ENCODE measurements at regions of chr2 and their contacts with region 1.

Region 1: DNA sequence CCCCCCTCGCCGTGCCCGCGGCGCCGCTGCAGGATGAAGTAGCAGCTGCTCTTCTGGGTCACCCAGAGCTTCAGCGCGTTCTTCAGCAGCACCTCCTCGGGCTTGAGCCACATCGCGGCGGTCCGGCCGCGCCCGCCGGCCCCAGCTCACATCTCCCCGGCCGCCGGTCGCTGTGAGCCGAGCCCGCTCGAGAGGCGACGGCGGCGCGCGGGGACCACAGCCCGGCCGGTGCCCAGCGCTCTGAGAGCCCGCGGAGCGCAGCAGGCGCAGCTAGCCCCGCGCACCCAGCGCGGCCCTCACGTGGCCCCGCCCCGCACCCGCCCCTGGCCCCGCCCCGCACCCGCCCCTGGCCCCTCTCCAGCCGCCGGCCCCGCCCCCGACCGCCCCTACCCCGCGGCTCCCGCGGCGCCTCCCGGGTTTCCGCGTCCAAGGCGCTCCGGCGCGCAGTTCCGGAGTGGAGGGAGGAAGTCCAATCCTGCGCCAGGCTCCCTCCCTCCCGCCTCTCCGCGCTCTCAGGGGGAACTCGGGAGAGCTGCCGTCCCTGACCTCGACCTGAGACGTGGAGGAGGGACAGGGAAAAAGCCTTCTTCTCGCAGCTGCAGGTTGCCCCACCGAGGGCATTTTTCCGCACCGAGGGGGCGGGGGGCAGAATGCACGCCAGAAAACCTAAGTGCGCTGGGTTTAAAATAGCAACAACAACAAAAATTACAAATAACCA is at the start of gene TBC1D8:
- DNase-seq: peak; percentile 80 to 82
- ATAC-seq: peak; percentile 81 to 83
- H3K4me3 ChIP-seq: peak within 1 kb of the TSS; percentile 85
- H3K27ac ChIP-seq: peak within 1 kb of the TSS; percentile 92 to 98
- H3K4me1 ChIP-seq: peaks cover 42% of the 10 kb centered on the region
- CTCF ChIP-seq: no peak
- EP300 ChIP-seq: no peak
- POLR2A ChIP-seq: peak; percentile 81
- RAD21 ChIP-seq: peak in 1 of 2 experiments; percentile 18; a peak in 2 of 5 replicates
- polyA plus RNA-seq, gene TBC1D8: 107 and 119 TPM in 2 replicates

Region 2: DNA sequence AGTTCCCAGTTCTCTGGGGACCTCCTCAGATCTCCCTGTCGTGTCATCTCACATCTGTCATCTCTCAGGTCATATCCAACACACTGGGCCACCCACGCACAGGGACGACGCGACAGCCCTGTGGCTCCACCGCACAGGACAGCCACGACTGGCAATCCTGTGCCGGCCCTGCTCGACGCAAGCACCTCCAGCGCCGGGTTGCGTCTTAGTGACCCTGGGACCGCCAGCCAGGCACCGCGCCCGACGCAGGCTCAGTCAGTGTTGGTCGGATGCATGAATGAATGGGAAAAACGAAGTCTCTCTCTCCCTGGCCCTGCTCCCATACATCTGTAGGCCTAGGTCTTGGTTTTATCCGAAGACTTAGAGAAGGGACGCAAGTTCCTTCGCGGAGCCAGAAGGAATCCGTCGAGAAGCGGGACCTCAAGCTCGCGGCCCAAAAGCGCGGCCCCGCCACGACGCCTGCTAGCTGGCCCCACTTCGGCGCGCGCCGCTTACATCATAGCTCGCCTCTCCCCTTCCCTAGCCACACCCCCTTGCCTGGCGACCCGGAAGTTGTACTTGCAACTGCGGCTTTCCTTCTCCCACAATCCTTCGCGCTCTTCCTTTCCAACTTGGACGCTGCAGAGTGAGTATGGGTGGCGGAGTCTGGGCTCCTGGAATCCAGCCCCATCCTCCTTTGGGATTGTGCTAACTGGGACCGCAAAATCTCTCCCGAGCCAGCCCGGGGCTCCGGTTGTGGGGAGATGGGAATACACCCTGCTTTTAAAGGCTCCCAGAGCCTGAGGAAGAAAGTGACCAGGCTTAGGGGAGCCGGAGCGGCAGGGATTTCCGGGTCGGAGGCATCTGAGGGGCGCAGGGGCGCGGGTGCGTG is 149.4 kb before region 1 on chr2 and contains the start of gene RPL31:
- CTCF ChIA-PET with region 1: interaction called, 17 read pairs
- POLR2A ChIA-PET with region 1: interaction called, 22 read pairs
- DNase-seq: peak; percentile 94 to 98
- ATAC-seq: peak; percentile 85 to 88
- H3K4me3 ChIP-seq: peak within 1 kb of the TSS; percentile 71
- H3K27ac ChIP-seq: peak within 1 kb of the TSS; percentile 86 to 98
- H3K4me1 ChIP-seq: peaks cover 39% of the 10 kb centered on the region
- CTCF ChIP-seq: no peak
- EP300 ChIP-seq: no peak
- POLR2A ChIP-seq: peak; percentile 97
- RAD21 ChIP-seq: no peak
- polyA plus RNA-seq, gene RPL31: 2,064 and 3,103 TPM in 2 replicates

Region 3: DNA sequence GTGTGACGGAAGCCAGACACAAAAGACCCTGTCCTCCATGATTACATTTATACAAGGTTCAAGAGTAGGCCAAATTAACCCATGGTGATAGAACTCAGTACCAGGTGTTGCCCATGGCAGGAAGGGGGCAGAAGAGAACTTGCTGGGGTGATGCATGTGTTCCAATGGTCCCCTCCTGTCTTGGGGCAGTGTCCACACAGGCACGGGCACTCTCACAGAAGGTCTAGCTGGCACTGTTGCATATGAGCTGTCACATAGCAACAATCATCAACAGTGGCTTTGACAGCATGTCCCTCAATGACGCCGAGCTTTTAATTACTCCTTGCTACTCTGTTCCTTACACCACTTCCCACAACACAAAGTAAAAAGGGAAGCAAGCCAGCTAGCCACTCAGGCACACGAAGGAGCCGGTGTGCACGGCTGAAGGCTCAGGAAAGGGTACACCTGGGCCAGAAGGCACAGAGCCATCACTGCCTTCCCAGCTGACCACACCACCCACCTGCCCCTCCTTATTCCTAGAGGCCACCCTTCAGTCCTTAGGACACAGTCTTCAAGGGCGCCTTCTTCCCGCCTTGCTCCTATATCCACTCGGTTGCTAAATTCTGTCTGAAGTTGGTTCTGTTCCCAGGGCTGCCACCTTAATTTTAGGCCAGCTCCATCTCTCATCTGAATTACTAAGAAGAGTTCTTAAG is 120.3 kb before region 1 on chr2:
- CTCF ChIA-PET with region 1: interaction called, 107 read pairs
- POLR2A ChIA-PET with region 1: interaction called, 6 read pairs
- DNase-seq: no peak
- ATAC-seq: peak; percentile 19 to 27; a peak in 2 of 6 replicates
- H3K4me3 ChIP-seq: no peak overlapping the region
- H3K27ac ChIP-seq: no peak overlapping the region
- H3K4me1 ChIP-seq: peaks cover 3% of the 10 kb centered on the region; the same call in 1 of the 3 replicates
- CTCF ChIP-seq: no peak
- EP300 ChIP-seq: no peak
- POLR2A ChIP-seq: no peak
- RAD21 ChIP-seq: peak in 1 of 2 experiments; percentile 28; a peak in 1 of 5 replicates

Region 4: GRCh38 chr2:101064868-101065549 is 86.3 kb before region 1 on chr2:
- CTCF ChIA-PET with region 1: interaction called, 14 read pairs
- POLR2A ChIA-PET with region 1: interaction called, 16 read pairs
- DNase-seq: peak; percentile 70 to 87
- ATAC-seq: peak; percentile 79 to 90
- H3K4me3 ChIP-seq: peak overlapping the region; percentile 21; the same call in 1 of the 3 replicates
- H3K27ac ChIP-seq: peak overlapping the region; percentile 81 to 86
- H3K4me1 ChIP-seq: peaks cover 83% of the 10 kb centered on the region
- CTCF ChIP-seq: no peak
- EP300 ChIP-seq: peak in 1 of 2 experiments; percentile 38; a peak in 1 of 5 replicates
- POLR2A ChIP-seq: no peak
- RAD21 ChIP-seq: no peak; a peak in 1 of 5 replicates

Region 5: DNA sequence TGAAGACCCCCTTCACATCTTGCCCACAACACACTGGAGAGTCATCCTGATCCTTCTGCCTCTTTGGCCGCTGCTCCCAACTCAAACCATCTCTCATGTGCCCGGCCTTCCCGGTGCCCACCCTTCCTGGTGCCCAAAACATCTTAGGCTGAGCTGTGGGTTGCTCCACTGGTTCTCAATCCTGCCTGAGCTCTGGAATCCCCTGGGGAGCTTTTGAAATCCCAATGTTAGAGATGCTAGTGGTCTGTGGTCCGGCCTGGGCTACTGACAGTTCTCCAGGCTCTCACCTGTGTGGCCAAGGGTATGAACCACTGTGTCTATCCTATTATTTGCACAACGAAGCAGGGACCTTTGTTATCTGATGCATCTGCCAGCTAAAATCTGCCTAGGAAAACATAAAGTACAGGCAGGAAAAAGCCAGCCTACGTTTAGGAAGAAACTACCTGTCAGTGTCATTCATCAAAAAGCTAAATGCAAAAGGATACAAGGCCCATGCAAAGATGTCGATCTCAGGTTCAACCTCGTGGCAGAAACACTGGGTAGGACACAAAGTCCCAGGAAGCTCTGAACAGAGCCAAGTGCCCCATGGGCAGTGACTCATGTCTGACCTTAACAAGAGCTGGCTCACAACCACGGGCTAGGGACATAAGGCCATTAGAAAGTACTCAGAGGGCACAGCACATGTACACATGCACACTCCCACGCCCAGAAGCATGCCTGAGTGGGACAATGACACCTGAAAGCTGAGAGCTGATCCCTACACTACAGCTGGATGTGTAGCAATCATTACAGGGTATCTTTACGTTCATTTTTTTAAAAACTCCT is 30.9 kb before region 1 on chr2:
- CTCF ChIA-PET with region 1: interaction called, 37 read pairs
- POLR2A ChIA-PET with region 1: interaction called, 26 read pairs
- DNase-seq: peak; percentile 49 to 95
- ATAC-seq: peak; percentile 51 to 58
- H3K4me3 ChIP-seq: peak overlapping the region; percentile 4; the same call in 1 of the 3 replicates
- H3K27ac ChIP-seq: peak overlapping the region; percentile 89 to 93
- H3K4me1 ChIP-seq: peaks cover 95% of the 10 kb centered on the region
- CTCF ChIP-seq: no peak
- EP300 ChIP-seq: peak; percentile 39 to 61; a peak in 2 of 5 replicates
- POLR2A ChIP-seq: no peak
- RAD21 ChIP-seq: peak; percentile 11 to 25; a peak in 3 of 5 replicates

Region 6: DNA sequence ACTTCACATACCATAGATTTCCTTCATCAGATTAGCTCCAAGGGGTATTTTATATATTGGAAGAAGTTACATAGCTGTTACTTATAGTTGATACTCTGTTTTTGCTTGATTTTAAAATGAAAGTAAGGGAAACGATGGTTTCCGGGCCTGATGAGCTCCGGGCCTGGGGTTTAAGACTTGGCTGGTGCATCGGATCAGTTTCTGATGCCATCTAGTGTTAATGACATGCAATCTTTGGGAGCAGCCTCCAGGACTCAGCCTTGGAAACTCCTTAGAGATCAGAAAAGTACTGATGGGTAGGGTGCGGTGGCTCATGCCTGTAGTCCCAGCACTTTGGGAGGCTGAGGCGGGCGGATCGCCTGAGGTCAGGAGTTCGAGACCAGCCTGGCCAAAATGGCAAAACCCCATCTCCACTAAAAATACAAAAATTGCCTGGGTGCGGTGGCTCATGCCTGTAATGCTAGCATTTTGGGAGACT is 54.3 kb after region 1 on chr2:
- CTCF ChIA-PET with region 1: interaction called, 20 read pairs
- POLR2A ChIA-PET with region 1: no interaction called
- DNase-seq: peak; percentile 59 to 93
- ATAC-seq: peak; percentile 97 to 99
- H3K4me3 ChIP-seq: peak overlapping the region; percentile 30; the same call in 2 of the 3 replicates
- H3K27ac ChIP-seq: peak overlapping the region; percentile 80 to 86
- H3K4me1 ChIP-seq: peaks cover 11% of the 10 kb centered on the region
- CTCF ChIP-seq: peak; percentile 70
- EP300 ChIP-seq: no peak
- POLR2A ChIP-seq: no peak
- RAD21 ChIP-seq: peak; percentile 86

Region 7: DNA sequence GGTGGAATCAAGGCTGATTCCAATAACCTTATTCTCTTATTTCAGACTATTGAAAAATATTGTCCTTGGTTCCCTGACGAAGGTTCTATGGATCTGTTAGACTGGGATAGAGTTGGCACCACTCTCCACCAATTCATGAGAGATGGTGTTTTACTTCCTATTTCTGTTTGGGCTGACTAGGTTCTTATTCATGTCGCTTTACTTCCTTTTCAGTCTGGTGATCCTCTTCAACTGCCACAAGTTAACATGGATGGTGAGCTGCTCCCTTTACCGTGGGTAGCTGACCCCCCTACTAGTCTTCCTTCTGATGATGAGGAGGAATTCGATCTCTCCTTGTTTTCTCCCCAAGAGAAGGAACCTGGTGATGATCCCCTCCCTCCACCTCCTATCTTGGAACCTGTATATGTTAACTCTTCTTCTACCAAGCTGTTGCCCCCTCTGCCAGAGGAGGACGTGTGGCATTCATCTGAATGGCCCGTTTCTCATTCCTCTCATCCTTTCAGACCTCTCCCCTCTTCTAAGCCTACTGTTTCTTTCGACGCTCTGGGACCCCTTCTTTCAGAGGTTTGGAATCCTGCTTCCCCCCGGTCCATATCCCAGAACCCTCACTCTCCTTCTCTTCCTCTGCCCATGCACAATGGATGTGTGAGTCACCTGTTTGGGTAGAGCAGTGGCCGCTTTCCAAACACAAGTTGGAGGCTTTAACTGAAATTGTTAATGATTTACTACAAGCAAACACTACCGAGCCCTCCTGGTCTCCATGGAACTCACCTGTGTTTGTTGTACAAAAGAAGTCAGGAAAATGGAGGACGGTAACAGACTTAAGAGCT is 87.8 kb after region 1 on chr2:
- CTCF ChIA-PET with region 1: no interaction called
- POLR2A ChIA-PET with region 1: no interaction called
- DNase-seq: peak; percentile 68 to 90
- ATAC-seq: peak; percentile 85 to 90
- H3K4me3 ChIP-seq: peak overlapping the region; percentile 27
- H3K27ac ChIP-seq: peak overlapping the region; percentile 71 to 83
- H3K4me1 ChIP-seq: peaks cover 24% of the 10 kb centered on the region
- CTCF ChIP-seq: no peak
- EP300 ChIP-seq: no peak
- POLR2A ChIP-seq: no peak
- RAD21 ChIP-seq: no peak